ENCODE measurements at regions of chr14 and their contacts with region 1.

Region 1: GRCh38 chr14:68513838-68514620 is 278.8 kb downstream of the ZFP36L1 start:
- DNase-seq: peak; percentile 92
- ATAC-seq: peak; percentile 92
- H3K4me3 ChIP-seq: no peak overlapping the region; the same call in 1 of the 2 replicates
- H3K27ac ChIP-seq: peak overlapping the region; percentile 85
- H3K4me1 ChIP-seq: peaks cover 24% of the 10 kb centered on the region
- H3K27me3 ChIP-seq: no peaks in the 10 kb centered on the region
- CTCF ChIP-seq: no peak
- EP300 ChIP-seq: 0 out of 4 replicates have a peak, but pooled peaks of 1 of the 2 experiments have one; percentile 46
- POLR2A ChIP-seq: peak; percentile 47; the same call in 1 of the 2 replicates
- RAD21 ChIP-seq: no peak

Region 2: GRCh38 chr14:68495101-68496039 is 18.7 kb before region 1 on chr14:
- CTCF ChIA-PET with region 1: interaction called, 3 read pairs
- POLR2A ChIA-PET with region 1: interaction called, 5 read pairs
- RAD21 ChIA-PET with region 1: interaction called, 5 read pairs
- SMC1A ChIA-PET with region 1: interaction called, 10 read pairs
- in situ Hi-C with region 1: no loop called
- intact Hi-C with region 1: no loop called
- DNase-seq: peak; percentile 83
- ATAC-seq: peak; percentile 92
- H3K4me3 ChIP-seq: no peak overlapping the region
- H3K27ac ChIP-seq: peak overlapping the region; percentile 68
- H3K4me1 ChIP-seq: peaks cover 24% of the 10 kb centered on the region
- H3K27me3 ChIP-seq: no peaks in the 10 kb centered on the region
- CTCF ChIP-seq: no peak
- EP300 ChIP-seq: peak; percentile 71 to 87; a peak in 2 of 4 replicates
- POLR2A ChIP-seq: no peak
- RAD21 ChIP-seq: 0 out of 2 replicates have a peak, but pooled peaks have one; percentile 8